PC-9 (cell line): ENCODE measurements at regions of chr19 and their contacts with region 1.

Region 1: GRCh38 chr19:48812094-48812929 is 1.5 kb upstream of the BCAT2 start:
- DNase-seq: peak; percentile 70 to 87
- H3K4me3 ChIP-seq: peak overlapping the region; percentile 88
- H3K27ac ChIP-seq: no peak overlapping the region
- H3K4me1 ChIP-seq: 0 out of 2 replicates have a peak, but pooled peaks cover 14% of the 10 kb centered on the region
- H3K27me3 ChIP-seq: no peaks in the 10 kb centered on the region
- CTCF ChIP-seq: no peak

Region 2: GRCh38 chr19:47901370-47901769 is 910.9 kb before region 1 on chr19:
- CTCF ChIA-PET with region 1: no interaction called
- POLR2A ChIA-PET with region 1: no interaction called
- intact Hi-C with region 1: no loop called
- DNase-seq: no peak
- H3K4me3 ChIP-seq: no peak overlapping the region
- H3K27ac ChIP-seq: no peak overlapping the region
- H3K4me1 ChIP-seq: no peaks in the 10 kb centered on the region
- H3K27me3 ChIP-seq: peaks cover 72% of the 10 kb centered on the region
- CTCF ChIP-seq: no peak

Region 3: DNA sequence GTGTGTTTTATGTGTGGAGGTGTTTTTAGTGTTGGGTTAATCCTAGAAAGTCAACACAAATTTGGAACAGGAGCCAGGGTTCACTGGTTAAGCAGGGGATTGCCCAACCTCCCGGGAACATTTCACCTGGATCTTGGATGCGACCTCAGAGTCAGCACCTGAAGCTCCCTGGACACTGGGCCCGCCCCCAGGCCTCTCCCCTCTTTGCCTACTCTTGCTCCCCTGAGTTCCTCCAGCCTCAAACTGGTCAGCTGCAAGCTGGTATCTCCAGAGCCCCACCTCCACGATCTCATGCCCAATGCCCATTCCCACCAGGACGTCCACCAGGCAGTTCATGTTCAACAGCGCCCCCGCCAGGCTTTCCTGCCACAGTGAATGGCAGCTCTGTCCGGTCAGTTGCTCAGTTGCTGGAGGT is 14.3 kb after region 1 on chr19:
- CTCF ChIA-PET with region 1: interaction called, 3 read pairs
- POLR2A ChIA-PET with region 1: interaction called, 22 read pairs
- intact Hi-C with region 1: no loop called
- DNase-seq: no peak
- H3K4me3 ChIP-seq: no peak overlapping the region
- H3K27ac ChIP-seq: no peak overlapping the region
- H3K4me1 ChIP-seq: peaks cover 6% of the 10 kb centered on the region; the same call in 1 of the 2 replicates
- H3K27me3 ChIP-seq: no peaks in the 10 kb centered on the region
- CTCF ChIP-seq: peak; percentile 59; the same call in 1 of the 2 replicates

Region 4: DNA sequence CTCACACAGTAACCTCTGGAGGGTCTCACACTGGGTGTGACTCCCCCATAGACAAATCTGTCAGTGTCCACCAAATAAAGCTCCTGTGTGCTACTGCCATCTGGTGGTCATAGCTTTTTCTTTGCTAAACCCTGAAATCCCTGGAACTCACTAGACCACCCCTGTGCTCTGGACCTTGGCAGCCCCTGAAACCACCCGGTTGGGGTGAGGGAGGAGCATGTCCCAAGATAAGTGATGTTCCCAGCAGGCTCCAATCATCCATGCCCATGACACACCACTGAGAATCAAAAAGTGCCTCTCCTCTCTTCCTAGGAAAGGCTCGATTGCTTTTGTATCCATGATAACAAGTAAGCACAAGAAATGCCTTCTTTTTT is 30.5 kb after region 1 on chr19:
- CTCF ChIA-PET with region 1: interaction called, 3 read pairs
- POLR2A ChIA-PET with region 1: interaction called, 51 read pairs
- intact Hi-C with region 1: no loop called
- DNase-seq: peak; percentile 36 to 50
- H3K4me3 ChIP-seq: no peak overlapping the region
- H3K27ac ChIP-seq: no peak overlapping the region
- H3K4me1 ChIP-seq: no peaks in the 10 kb centered on the region
- H3K27me3 ChIP-seq: no peaks in the 10 kb centered on the region
- CTCF ChIP-seq: peak; percentile 95

Region 5: DNA sequence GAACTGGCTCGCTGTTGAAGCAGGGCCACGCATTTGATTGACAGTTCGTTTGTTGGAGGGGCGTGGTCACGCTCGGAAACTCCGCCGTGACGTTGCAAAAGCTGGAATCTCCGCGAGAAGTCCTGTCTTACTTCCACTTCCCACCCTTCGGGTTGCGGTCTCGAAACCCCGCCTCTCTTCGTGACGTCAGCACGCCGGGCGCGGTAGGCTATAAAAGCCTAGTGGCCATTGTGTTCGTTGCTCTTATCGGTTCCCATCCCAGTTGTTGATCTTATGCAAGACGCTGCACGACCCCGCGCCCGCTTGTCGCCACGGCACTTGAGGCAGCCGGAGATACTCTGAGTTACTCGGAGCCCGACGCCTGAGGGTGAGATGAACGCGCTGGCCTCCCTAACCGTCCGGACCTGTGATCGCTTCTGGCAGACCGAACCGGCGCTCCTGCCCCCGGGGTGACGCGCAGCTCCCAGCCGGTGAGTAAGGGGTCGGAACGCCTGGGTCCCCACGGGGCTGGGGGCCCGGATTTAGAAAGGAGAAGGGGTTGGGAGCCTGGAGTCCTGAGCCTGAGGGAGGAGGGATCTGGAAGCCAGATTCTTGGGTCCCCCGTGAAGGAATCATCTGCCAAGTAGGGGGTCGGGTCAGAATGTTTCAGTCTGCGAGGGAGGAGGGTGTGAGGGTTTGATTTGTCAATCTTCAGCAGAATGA is 60.0 kb after region 1 on chr19 and contains the start of gene PPP1R15A:
- CTCF ChIA-PET with region 1: interaction called, 3 read pairs
- POLR2A ChIA-PET with region 1: no interaction called
- intact Hi-C with region 1: loop called (anchors 2 kb)
- DNase-seq: peak; percentile 95 to 98
- H3K4me3 ChIP-seq: peak within 1 kb of the TSS; percentile 93
- H3K27ac ChIP-seq: peak within 1 kb of the TSS; percentile 97
- H3K4me1 ChIP-seq: peaks cover 22% of the 10 kb centered on the region
- H3K27me3 ChIP-seq: peaks cover 2% of the 10 kb centered on the region; the same call in 1 of the 2 replicates
- CTCF ChIP-seq: peak; percentile 39; the same call in 1 of the 2 replicates
- total RNA-seq, gene PPP1R15A: 49.5 and 53.6 TPM in 2 replicates

Region 6: DNA sequence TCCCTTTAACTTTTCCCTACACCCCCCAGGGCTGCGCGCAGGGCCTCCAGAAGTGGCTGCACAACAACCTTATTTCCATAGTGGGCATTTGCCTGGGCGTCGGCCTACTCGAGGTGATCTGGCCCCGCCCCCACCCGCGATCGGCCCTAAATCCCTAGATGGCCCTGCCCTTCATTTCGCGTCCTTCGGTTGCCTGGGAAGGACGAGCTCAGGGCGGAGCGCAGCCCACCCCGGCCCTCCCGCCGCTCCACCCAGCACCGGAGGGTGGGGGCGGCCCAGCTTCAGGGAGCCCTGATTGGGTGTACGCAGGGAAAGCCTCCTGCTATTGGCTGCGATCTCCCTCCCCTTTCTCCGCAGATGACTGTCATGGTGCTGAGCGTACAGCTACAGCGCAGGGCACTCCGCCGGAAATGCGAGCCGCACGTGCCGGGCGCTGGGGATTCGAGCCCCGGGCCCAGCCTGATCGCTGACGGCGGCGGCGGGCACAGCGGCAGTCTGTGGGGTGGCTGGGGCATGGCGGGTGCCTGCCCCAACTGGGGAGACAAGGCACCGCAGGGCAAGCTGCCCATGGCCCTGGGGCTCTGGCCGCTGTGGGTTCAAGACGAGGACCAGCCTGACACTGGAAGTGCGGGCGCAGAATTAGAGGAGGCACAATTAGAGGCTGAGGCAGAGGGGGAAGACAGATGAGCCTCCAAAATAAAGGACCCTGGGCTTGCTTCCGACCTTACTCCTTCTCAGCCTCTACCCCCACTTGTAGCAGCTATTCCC is 527.2 kb after region 1 on chr19:
- CTCF ChIA-PET with region 1: interaction called, 13 read pairs
- POLR2A ChIA-PET with region 1: no interaction called
- intact Hi-C with region 1: no loop called
- DNase-seq: peak in 1 of 2 experiments; percentile 87
- H3K4me3 ChIP-seq: no peak overlapping the region
- H3K27ac ChIP-seq: no peak overlapping the region
- H3K4me1 ChIP-seq: no peaks in the 10 kb centered on the region
- H3K27me3 ChIP-seq: no peaks in the 10 kb centered on the region
- CTCF ChIP-seq: no peak